Right cardiac atrium (tissue), 5 donors: ENCODE measurements at regions of chr1 and their contacts with region 1.

Region 1: DNA sequence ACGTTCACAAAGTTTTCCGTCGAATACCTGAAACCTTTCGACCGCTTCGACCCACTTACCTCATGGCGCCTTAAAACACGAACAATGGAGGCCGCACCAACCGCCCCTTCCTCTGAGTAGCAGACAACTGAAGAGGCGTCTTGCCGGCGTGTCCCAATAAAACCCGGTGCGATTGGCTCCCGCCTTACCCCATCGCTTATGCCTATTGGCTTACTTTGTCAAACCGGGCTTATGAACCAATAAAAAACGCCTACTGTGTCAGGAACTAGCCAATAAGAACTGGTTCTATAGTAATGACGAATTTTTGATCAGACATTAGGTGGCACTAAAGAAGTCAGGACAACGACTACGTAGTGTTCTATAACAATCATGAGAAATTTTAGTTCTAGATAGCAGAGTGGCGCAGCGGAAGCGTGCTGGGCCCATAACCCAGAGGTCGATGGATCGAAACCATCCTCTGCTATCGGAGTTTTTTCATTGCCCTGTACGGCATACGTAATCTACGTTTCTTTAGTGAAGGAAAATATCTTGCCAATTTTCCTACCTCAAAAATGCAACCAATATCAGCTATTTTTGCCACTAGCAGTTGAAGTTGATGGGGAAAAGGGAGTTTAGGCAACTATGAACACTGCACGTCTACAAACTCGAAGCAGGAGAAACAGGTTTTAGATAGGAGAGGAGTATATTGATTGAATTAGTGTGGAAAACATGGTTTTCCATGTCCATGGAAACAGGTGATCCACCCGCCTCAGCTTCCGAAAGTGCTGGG is at the start of gene ILF2:
- DNase-seq: peak; percentile 98 to 99 (median 99)
- ATAC-seq: peak; percentile 97
- H3K4me3 ChIP-seq: peak within 1 kb of the TSS; percentile 97
- H3K27ac ChIP-seq: peak within 1 kb of the TSS; percentile 90
- H3K4me1 ChIP-seq: no peaks in the 10 kb centered on the region
- H3K27me3 ChIP-seq: no peaks in the 10 kb centered on the region
- total RNA-seq, gene ILF2: 66.9 to 85.0 (median 70.2) TPM

Region 2: GRCh38 chr1:153985941-153986761 is 315.1 kb after region 1 on chr1 and contains the start of gene RAB13:
- intact Hi-C with region 1: loop called (anchors 5 to 10 kb)
- DNase-seq: peak; percentile 92 to 96 (median 94)
- ATAC-seq: peak; percentile 90 to 92
- H3K4me3 ChIP-seq: peak within 1 kb of the TSS; percentile 60
- H3K27ac ChIP-seq: peak within 1 kb of the TSS; percentile 98
- H3K4me1 ChIP-seq: peaks cover 3% of the 10 kb centered on the region
- H3K27me3 ChIP-seq: no peaks in the 10 kb centered on the region
- total RNA-seq, gene RAB13: 62.2 to 78.2 (median 69.5) TPM